Activated B cell treated with CpG ODN at 0.5 μM for 24 hours (primary cell): ENCODE measurements at regions of chr11 and their contacts with region 1.

Region 1: GRCh38 chr11:34977089-34977906 is 60.9 kb downstream of the PDHX start:
- DNase-seq: no peak
- ATAC-seq: no peak
- H3K4me3 Mint-ChIP-seq: no peak overlapping the region
- H3K27ac Mint-ChIP-seq: no peak overlapping the region
- H3K4me1 Mint-ChIP-seq: no peaks in the 10 kb centered on the region
- H3K27me3 Mint-ChIP-seq: no peaks in the 10 kb centered on the region
- CTCF ChIP-seq: no peak

Region 2: DNA sequence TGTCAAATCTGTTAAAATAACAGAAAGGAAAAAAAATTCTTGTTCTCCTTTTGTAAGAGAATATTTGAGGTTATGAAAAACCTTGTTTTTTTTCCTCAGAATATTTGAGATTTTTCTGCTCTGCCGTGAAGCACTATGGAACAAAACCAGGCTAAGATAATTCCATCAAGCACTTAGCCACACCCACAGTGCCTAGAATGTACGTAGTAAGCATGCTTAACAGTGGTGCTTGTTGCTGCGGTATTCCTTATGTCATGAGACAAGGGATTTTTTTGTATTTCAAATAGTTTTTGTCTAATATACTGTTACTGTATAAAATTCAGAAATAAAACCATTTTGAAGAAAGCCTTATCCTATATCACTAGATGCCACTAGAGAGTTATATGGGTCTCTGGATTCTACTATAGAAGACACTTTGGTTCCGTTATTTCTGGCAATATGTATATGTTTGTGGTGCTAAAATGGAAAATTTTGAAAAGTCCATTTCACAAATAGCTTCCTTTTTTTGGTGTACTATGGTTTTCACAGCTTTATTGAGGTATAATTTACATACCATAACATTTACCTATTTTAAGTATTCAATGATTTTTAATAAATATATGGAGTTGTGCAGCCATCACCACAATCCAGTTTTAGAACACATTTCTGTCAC is 37.1 kb before region 1 on chr11:
- CTCF ChIA-PET with region 1: no interaction called
- POLR2A ChIA-PET with region 1: no interaction called
- intact Hi-C with region 1: loop called (anchors 5 kb)
- DNase-seq: no peak
- ATAC-seq: no peak
- H3K4me3 Mint-ChIP-seq: no peak overlapping the region
- H3K27ac Mint-ChIP-seq: no peak overlapping the region
- H3K4me1 Mint-ChIP-seq: peaks cover 17% of the 10 kb centered on the region
- H3K27me3 Mint-ChIP-seq: no peaks in the 10 kb centered on the region
- CTCF ChIP-seq: no peak